ENCODE measurements at regions of chr9 and their contacts with region 1.

Region 1: DNA sequence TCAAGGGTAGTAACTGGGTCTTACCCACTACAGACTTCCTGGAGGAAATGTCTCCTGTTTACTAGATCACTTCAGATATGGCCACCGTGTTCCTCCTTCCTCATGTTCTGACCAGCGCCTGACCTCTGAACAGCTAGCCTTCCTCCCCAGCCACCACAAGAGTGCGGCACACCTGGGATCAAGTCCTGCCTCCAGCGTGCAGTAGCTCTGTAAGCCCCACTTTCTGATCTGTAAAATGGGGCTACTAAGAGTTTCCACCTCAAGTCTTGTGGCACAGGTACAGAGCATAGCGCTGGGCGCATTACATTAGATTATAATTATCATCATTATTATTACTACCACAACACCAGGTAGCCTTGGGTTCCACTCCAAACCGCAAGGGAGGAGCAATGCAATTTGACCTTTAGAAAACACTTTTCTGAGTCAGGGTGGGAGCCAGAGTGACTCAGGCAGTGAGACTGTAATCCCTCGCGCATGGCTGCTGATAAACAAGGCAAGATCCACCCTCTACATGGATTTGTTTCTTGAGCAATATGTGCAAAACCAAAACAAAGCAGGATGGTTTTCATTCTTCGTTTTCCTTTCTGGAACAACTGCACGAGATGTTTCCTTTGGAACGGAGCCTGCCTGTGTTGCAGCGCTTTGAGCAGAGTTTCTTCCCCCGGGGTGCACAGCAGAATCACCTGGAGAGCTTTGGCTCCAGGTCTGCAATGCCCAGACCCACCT is 65.0 kb upstream of the ANGPTL2 start:
- DNase-seq: peak; percentile 99
- H3K4me3 Mint-ChIP-seq: no peak overlapping the region
- H3K27ac Mint-ChIP-seq: peak overlapping the region; percentile 23
- H3K4me1 Mint-ChIP-seq: peaks cover 11% of the 10 kb centered on the region
- H3K27me3 Mint-ChIP-seq: peaks cover 39% of the 10 kb centered on the region
- CTCF ChIP-seq: no peak

Region 2: GRCh38 chr9:127049044-127049443 is 138.3 kb before region 1 on chr9:
- CTCF ChIA-PET with region 1: no interaction called
- POLR2A ChIA-PET with region 1: no interaction called
- intact Hi-C with region 1: loop called (anchors 5 kb)
- DNase-seq: peak; percentile 96
- H3K4me3 Mint-ChIP-seq: peak overlapping the region; percentile 59
- H3K27ac Mint-ChIP-seq: peak overlapping the region; percentile 92
- H3K4me1 Mint-ChIP-seq: peaks cover 11% of the 10 kb centered on the region
- H3K27me3 Mint-ChIP-seq: no peaks in the 10 kb centered on the region
- CTCF ChIP-seq: no peak

Region 3: GRCh38 chr9:127224178-127224882 is 36.9 kb after region 1 on chr9:
- CTCF ChIA-PET with region 1: no interaction called
- POLR2A ChIA-PET with region 1: no interaction called
- intact Hi-C with region 1: no loop called
- DNase-seq: peak; percentile 74
- H3K4me3 Mint-ChIP-seq: peak overlapping the region; percentile 83
- H3K27ac Mint-ChIP-seq: no peak overlapping the region
- H3K4me1 Mint-ChIP-seq: no peaks in the 10 kb centered on the region
- H3K27me3 Mint-ChIP-seq: peaks cover 29% of the 10 kb centered on the region
- CTCF ChIP-seq: no peak

Region 4: GRCh38 chr9:127347831-127348779 is 160.7 kb after region 1 on chr9:
- CTCF ChIA-PET with region 1: no interaction called
- POLR2A ChIA-PET with region 1: no interaction called
- intact Hi-C with region 1: no loop called
- DNase-seq: peak; percentile 38
- H3K4me3 Mint-ChIP-seq: no peak overlapping the region
- H3K27ac Mint-ChIP-seq: no peak overlapping the region
- H3K4me1 Mint-ChIP-seq: no peaks in the 10 kb centered on the region
- H3K27me3 Mint-ChIP-seq: no peaks in the 10 kb centered on the region
- CTCF ChIP-seq: peak; percentile 41